ENCODE measurements at regions of chr1 and their contacts with region 1.

Region 1: GRCh38 chr1:110780600-110781484 is 92.1 kb upstream of the CD53 start:
- DNase-seq: peak; percentile 84 to 93 (median 89)
- H3K4me3 ChIP-seq: peak overlapping the region in 2 of 7 experiments; percentile 16 to 57
- H3K27ac ChIP-seq: no peak overlapping the region
- H3K4me1 ChIP-seq: peaks cover 4 to 17% (median 11%) of the 10 kb centered on the region in 4 experiments
- H3K27me3 ChIP-seq: peaks cover 0 to 5% (median 0%) of the 10 kb centered on the region in 5 experiments

Region 2: GRCh38 chr1:110554871-110555801 is 225.7 kb before region 1 on chr1:
- CTCF ChIA-PET with region 1: interaction called, 22 read pairs
- POLR2A ChIA-PET with region 1: no interaction called
- DNase-seq: peak; percentile 50 to 73 (median 70)
- H3K4me3 ChIP-seq: peak overlapping the region in 5 of 7 experiments; percentile 9 to 66 (median 52)
- H3K27ac ChIP-seq: no peak overlapping the region
- H3K4me1 ChIP-seq: peaks cover 0 to 11% (median 8%) of the 10 kb centered on the region in 4 experiments
- H3K27me3 ChIP-seq: peaks cover 5 to 69% (median 37%) of the 10 kb centered on the region in 5 experiments

Region 3: DNA sequence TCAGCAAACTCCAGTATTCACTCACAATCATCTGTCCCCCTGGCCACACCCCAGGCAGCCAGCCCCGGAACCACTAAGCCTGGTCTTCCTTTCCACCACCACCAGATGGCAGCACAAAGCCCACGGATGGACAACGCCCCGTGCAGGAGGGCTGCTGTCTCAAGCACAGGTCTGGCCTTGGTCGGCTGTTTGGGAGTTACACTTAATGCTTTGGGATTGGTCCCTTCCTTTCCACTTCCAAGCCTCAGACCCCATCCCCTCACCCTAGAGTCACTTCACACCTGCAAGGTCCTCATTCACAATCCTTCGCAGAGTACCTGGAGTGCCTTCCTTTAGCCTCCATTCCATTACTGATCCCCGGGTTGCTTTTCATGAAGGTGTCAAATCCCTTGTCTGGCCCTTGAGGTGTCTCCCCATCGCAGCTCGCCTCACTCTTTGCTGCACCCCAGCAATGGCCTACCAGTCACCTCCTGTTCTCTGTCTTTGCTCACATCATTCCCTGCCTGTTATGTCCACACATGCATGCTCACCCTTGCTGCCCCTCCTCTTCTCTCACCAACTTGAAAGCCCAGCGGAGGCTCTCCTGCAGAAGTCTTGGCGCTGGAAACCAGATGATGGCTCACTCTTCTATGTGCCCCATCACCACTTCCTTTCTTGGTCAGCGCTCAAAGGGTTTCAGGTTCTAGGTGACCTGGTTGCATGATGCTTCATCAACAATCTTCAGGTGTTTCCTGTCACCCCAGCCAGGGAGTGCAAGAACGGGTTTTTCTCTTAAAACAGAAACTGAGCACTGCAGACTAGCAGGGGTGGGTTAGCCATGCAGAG is 149.8 kb before region 1 on chr1:
- CTCF ChIA-PET with region 1: interaction called, 24 read pairs
- POLR2A ChIA-PET with region 1: no interaction called
- DNase-seq: peak; percentile 69 to 82 (median 80)
- H3K4me3 ChIP-seq: peak overlapping the region in 1 of 7 experiments; percentile 19
- H3K27ac ChIP-seq: no peak overlapping the region
- H3K4me1 ChIP-seq: peaks cover 0 to 18% (median 12%) of the 10 kb centered on the region in 4 experiments
- H3K27me3 ChIP-seq: no peaks in the 10 kb centered on the region

Region 4: GRCh38 chr1:110696818-110697217 is 84.0 kb before region 1 on chr1:
- CTCF ChIA-PET with region 1: no interaction called
- POLR2A ChIA-PET with region 1: no interaction called
- DNase-seq: no peak
- H3K4me3 ChIP-seq: no peak overlapping the region
- H3K27ac ChIP-seq: no peak overlapping the region
- H3K4me1 ChIP-seq: no peaks in the 10 kb centered on the region
- H3K27me3 ChIP-seq: peaks cover 0 to 4% (median 3%) of the 10 kb centered on the region in 5 experiments

Region 5: GRCh38 chr1:110766025-110766647 is 14.7 kb before region 1 on chr1:
- CTCF ChIA-PET with region 1: interaction called, 28 read pairs
- POLR2A ChIA-PET with region 1: no interaction called
- DNase-seq: peak; percentile 69 to 87 (median 84)
- H3K4me3 ChIP-seq: no peak overlapping the region
- H3K27ac ChIP-seq: no peak overlapping the region
- H3K4me1 ChIP-seq: peaks cover 0 to 2% (median 0%) of the 10 kb centered on the region in 4 experiments
- H3K27me3 ChIP-seq: peaks cover 0 to 18% (median 6%) of the 10 kb centered on the region in 5 experiments

Region 6: DNA sequence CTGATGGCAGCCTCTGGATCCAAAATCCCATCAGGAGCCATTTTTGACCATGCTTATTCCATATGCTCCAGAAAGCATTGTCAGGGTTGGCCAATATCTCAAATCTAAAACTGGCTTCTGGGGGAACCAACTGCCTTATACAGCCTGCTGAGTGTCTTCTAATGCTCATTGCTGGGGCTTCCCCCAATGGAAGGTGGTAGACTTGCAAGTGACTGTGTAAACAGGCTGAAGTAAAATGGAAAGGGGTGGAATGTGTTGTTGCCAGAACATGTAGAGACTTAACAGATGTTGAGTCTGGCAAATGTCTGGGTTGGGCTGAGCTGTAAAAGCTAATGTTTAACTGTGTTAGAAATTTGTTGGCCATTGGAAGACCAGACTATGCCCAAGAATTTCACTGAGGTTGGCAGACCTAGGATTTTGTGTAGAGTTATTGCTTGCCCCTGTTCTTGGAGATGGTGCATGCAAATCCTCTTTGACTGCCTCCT is 205.6 kb after region 1 on chr1:
- CTCF ChIA-PET with region 1: interaction called, 16 read pairs
- POLR2A ChIA-PET with region 1: no interaction called
- DNase-seq: no peak
- H3K4me3 ChIP-seq: no peak overlapping the region
- H3K27ac ChIP-seq: no peak overlapping the region
- H3K4me1 ChIP-seq: no peaks in the 10 kb centered on the region
- H3K27me3 ChIP-seq: no peaks in the 10 kb centered on the region

Measured in common myeloid progenitor, CD34-positive (primary cell).